ENCODE measurements at regions of chr1 and their contacts with region 1.

Region 1: GRCh38 chr1:26877326-26877725 is 12.8 kb downstream of the GPN2 start:
- DNase-seq: no peak
- H3K4me3 Mint-ChIP-seq: no peak overlapping the region
- H3K27ac Mint-ChIP-seq: no peak overlapping the region
- H3K4me1 Mint-ChIP-seq: no peaks in the 10 kb centered on the region
- H3K27me3 Mint-ChIP-seq: no peaks in the 10 kb centered on the region

Region 2: DNA sequence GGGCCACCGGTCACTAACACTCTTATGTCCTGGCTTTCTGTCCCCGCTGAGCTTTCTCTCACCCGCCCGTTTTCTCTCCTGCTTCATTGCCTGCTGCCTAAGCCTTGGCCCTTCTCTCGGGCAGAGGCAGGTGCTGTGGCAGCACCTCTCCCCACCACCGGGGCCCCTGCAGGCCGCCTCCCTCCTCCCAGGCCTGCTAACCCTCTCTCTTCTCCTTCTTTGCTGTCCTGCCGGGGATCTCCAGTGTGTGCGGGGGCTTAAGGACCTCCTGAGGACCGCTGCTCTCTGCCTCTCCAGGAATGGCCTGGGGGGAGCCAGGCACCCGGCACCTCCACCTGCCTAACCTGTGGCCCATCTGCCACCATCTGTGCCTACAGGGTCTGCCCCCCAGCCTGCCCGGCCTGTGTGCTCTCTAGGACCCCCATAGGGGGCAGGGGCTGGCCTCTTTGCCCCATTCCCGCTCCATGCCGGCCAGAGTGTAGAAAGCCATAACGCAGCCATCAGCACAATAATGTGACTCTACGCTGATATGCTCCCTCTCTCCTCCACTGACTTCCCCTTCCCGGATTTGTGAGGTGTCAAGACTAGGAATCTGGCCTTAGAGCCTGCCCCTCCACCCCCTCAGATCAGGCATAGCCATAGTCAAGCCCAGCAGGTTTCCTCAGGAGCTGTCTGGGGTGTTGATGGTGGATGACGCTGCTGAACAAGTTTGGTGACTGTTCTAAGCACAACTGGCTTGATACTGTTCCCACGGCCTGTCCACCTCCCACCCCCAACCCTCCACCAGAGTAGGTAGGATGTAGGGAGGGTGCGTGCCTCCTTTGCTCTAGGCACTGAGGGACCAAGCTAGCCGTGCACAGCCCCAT is 20.5 kb before region 1 on chr1:
- CTCF ChIA-PET with region 1: interaction called, 28 read pairs
- POLR2A ChIA-PET with region 1: no interaction called
- intact Hi-C with region 1: no loop called
- DNase-seq: no peak
- H3K4me3 Mint-ChIP-seq: no peak overlapping the region
- H3K27ac Mint-ChIP-seq: no peak overlapping the region
- H3K4me1 Mint-ChIP-seq: peaks cover under 1% of the 10 kb centered on the region
- H3K27me3 Mint-ChIP-seq: no peaks in the 10 kb centered on the region

Region 3: GRCh38 chr1:27057801-27058625 is 180.7 kb after region 1 on chr1:
- CTCF ChIA-PET with region 1: no interaction called
- POLR2A ChIA-PET with region 1: no interaction called
- intact Hi-C with region 1: no loop called
- DNase-seq: no peak
- H3K4me3 Mint-ChIP-seq: no peak overlapping the region
- H3K27ac Mint-ChIP-seq: no peak overlapping the region
- H3K4me1 Mint-ChIP-seq: no peaks in the 10 kb centered on the region
- H3K27me3 Mint-ChIP-seq: no peaks in the 10 kb centered on the region

Measured in activated CD4-positive, alpha-beta memory T cell treated with anti-CD3 and anti-CD28 coated beads for 36 hours (primary cell).